Activated CD8-positive, alpha-beta memory T cell treated with anti-CD3 and anti-CD28 coated beads, Interleukin-2, amount 10 ng/mL, durations not matched to agents 7 days and 5 days (primary cell): ENCODE measurements at regions of chr16 and their contacts with region 1.

Region 1: DNA sequence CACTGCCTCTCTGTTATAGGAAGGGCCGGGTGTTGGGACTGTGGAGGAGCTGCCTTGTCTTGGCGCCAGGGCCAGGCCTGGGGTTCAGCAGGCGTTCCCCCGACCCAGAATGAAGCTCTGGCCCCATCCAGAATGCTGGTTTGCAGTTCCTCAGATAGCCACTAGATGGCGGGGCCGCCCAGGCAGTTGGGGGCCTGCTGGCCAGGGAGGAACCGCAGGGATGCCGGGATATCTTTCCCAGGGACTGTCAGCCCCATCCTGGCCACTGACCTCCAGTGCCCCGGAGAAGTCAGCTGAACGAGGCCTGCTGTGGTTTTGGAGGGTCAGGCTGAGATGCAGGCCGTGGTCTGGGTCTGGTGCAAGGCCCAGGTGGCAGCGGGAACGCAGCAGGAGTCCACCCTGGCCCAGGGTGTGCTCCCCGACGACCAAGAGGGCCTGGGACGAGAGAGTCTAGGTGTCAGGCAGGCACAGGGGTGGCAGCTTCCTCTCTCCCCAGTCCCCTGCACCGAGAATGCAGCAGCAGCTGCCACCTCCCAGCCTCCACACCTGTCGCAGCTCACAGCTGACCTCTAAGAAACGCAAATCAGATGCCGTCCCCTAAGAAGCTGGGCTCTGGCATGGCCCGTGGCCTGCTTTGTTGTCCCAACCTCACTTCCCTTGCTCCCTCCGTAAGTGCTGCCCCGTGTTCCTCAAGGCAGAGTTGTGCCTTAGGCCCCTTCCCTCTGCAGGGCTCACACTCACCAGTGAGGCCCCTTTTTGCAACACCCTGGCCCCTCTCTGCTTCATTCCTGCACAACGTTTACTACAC is 51.2 kb downstream of the RMI2 start:
- DNase-seq: peak; percentile 71
- ATAC-seq: peak; percentile 74
- H3K4me3 Mint-ChIP-seq: no peak overlapping the region
- H3K27ac Mint-ChIP-seq: no peak overlapping the region
- H3K4me1 Mint-ChIP-seq: no peaks in the 10 kb centered on the region
- H3K27me3 Mint-ChIP-seq: peaks cover 7% of the 10 kb centered on the region

Region 2: GRCh38 chr16:11370084-11370931 is 26.1 kb before region 1 on chr16:
- CTCF ChIA-PET with region 1: interaction called, 12 read pairs
- DNase-seq: no peak
- ATAC-seq: no peak
- H3K4me3 Mint-ChIP-seq: no peak overlapping the region
- H3K27ac Mint-ChIP-seq: no peak overlapping the region
- H3K4me1 Mint-ChIP-seq: peaks cover 6% of the 10 kb centered on the region
- H3K27me3 Mint-ChIP-seq: peaks cover 21% of the 10 kb centered on the region

Region 3: DNA sequence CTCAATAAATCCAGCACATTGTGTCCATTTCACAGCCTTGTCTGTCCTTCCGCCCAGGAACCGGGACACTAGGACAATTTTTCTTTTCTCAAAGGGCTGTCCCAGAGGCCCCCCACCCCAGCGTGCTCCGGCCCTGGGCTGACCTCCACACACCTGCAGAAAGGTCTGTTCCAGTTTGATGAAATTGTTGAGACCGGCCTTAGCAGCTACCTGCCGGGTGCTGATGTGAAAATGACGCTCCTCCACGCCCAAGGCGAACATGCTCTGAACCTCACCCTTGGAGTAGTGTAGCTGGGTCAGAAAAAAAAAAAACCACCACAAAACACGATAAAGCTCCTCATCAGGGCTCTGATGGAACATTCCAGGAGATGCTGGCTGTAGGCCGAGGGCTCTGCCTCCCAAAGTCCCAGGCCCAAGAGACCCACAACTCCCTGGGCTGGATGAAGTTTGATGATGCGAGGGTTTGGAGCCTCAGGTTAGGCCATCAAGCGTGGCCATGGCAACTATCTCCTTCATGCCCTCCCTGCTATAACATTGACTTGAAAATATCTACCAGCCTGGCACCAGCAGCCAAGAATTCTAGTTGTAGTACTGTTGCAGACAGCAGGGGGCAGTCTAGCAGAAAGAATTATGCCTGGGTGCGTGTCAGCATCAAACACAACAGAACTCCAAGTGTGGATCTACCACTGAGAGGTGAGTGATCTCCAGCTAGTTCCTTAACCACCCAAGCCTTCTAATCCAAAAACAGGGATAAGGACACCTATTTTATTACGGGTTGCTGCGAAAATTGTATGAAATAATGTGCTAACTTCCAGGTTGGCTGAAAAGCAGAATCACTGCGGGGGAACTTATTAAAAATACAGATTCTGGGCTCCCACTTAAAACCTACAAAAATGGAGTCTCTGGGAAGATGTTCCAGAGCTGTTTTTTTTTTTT is 10.9 kb after region 1 on chr16:
- CTCF ChIA-PET with region 1: interaction called, 58 read pairs
- DNase-seq: peak; percentile 78
- ATAC-seq: peak; percentile 50
- H3K4me3 Mint-ChIP-seq: no peak overlapping the region
- H3K27ac Mint-ChIP-seq: no peak overlapping the region
- H3K4me1 Mint-ChIP-seq: peaks cover 4% of the 10 kb centered on the region
- H3K27me3 Mint-ChIP-seq: peaks cover 3% of the 10 kb centered on the region

Region 4: DNA sequence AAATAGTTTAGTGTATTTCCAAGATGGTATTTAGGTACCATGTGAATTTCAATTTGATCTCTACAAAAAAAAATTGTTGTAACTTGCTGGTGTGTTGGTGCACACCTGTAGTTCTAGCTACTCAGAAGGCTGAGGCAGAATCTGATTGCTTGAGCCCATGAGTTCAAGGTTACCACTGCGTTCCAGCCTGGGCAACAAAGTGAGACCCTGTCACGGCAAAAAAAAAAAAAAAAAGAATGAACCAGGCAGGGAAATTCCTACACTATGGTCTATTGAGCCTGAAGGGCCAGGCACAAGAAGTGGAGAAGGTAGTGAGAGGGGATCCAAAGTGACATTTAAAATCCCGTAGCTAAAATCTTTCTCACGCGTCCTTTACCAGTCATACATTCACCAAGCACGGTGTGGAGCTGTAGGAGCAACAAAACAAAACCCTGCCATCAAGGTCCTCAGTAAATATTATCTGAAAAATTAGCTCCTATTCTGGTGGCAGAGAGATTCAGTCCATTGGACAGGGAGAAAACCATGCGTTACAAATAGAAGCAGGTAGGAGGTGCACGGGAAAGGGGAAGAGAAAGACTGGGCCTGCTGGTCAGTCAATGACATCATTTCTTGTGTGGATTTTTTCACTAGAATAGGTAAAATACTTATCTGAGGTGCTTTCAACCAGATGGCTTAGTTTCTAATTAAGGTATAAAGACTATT is 319.0 kb after region 1 on chr16:
- CTCF ChIA-PET with region 1: interaction called, 26 read pairs
- DNase-seq: no peak
- ATAC-seq: no peak
- H3K4me3 Mint-ChIP-seq: no peak overlapping the region
- H3K27ac Mint-ChIP-seq: no peak overlapping the region
- H3K4me1 Mint-ChIP-seq: peaks cover 16% of the 10 kb centered on the region
- H3K27me3 Mint-ChIP-seq: no peaks in the 10 kb centered on the region